HEK293 (cell line): ENCODE measurements at regions of chr20 and their contacts with region 1.

Region 1: GRCh38 chr20:44460795-44461141 is 14.9 kb upstream of the TTPAL start:
- H3K4me3 ChIP-seq: no peak overlapping the region
- H3K27ac ChIP-seq: no peak overlapping the region
- H3K4me1 ChIP-seq: no peaks in the 10 kb centered on the region
- CTCF ChIP-seq: no peak

Region 2: DNA sequence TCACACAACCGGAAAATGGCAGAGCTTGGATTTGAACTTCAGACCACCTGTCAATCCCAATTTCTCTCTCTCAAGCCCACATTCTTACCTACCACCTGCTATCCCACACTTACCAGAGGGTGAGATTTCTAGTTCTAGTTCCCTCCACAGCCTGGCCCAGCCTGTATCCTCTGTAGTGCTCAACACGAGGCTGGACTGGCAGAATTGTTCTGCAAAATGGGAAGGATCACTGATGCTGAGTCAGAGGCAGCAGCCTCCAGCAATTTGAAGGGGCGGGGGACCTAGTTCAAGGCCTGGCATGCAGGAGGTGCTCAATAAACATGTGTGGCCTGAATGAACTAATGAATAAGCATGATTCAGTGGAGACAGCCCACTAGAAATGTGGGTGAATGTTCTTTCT is 38.7 kb before region 1 on chr20:
- CTCF ChIA-PET with region 1: no interaction called
- POLR2A ChIA-PET with region 1: no interaction called
- H3K4me3 ChIP-seq: no peak overlapping the region
- H3K27ac ChIP-seq: no peak overlapping the region
- H3K4me1 ChIP-seq: no peaks in the 10 kb centered on the region
- CTCF ChIP-seq: no peak

Region 3: DNA sequence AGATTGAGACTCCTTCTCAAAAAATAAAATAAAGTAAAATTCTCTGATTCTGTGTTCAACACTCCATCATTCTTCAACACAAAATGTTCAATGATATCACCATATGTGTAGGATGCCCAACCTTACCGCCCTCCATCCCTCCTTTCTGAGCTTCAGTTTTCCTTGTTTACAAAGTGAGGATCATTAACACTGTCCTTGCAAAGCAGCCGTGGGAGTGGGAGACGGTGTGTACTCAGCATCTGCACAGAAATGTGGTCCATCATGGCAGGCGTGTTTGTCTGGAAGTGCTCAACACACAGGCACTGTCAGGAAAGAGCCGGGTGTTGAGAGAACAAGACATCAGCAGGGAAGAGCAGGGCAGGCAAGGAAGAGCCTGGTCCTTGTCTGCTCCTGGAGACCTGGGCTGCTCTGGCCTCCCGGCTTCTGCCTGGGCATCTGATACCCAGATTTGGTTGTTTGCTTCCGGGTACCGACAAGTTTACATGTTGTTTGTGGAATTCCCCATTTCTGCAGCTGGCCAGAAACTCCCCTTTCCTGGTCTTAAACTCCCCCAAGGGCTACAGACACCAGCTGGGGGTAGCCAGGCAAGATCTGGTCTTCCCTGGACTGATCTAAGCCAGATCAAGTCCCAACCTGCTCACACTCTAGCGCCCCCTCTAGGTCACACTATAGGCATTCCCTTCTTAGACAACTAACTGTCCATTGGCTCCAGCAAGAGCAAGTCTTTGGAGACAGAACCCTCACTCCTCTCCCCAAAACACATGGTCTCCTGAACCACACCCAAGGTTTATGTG is 11.8 kb before region 1 on chr20:
- CTCF ChIA-PET with region 1: interaction called, 11 read pairs
- POLR2A ChIA-PET with region 1: no interaction called
- H3K4me3 ChIP-seq: no peak overlapping the region
- H3K27ac ChIP-seq: no peak overlapping the region
- H3K4me1 ChIP-seq: no peaks in the 10 kb centered on the region
- CTCF ChIP-seq: 0 out of 2 replicates have a peak, but pooled peaks have one; percentile 31

Region 4: GRCh38 chr20:44598423-44599305 is 137.9 kb after region 1 on chr20:
- CTCF ChIA-PET with region 1: no interaction called
- POLR2A ChIA-PET with region 1: no interaction called
- H3K4me3 ChIP-seq: no peak overlapping the region
- H3K27ac ChIP-seq: no peak overlapping the region
- H3K4me1 ChIP-seq: peaks cover 8% of the 10 kb centered on the region; the same call in 1 of the 2 replicates
- CTCF ChIP-seq: no peak

Region 5: GRCh38 chr20:44618318-44618731 is 157.6 kb after region 1 on chr20:
- CTCF ChIA-PET with region 1: no interaction called
- POLR2A ChIA-PET with region 1: no interaction called
- H3K4me3 ChIP-seq: no peak overlapping the region
- H3K27ac ChIP-seq: no peak overlapping the region
- H3K4me1 ChIP-seq: no peaks in the 10 kb centered on the region
- CTCF ChIP-seq: no peak